MCF 10A (cell line): ENCODE measurements at regions of chr17 and their contacts with region 1.

Region 1: DNA sequence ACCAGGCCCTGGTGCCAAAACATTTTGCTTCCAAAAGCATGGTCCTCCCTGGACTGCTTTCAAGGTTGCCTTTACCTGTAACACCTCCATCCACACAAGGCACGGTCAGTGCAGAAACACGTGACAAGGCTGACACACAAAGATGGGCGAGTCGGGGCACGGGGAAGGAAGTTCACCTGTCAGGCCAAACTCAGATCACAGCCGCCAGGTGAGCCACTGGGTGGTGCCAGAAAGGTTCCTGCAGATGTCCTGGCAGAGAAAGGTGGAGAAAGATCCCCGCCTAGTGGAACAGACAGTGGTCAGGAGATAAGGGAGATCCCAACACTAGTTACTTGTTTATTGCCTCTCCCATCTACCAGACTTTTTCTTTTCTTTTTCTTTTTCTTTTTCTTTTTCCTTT is 155.3 kb downstream of the AIPL1 start:
- DNase-seq: peak; percentile 79
- H3K4me3 Mint-ChIP-seq: no peak overlapping the region
- H3K27ac Mint-ChIP-seq: no peak overlapping the region
- H3K4me1 Mint-ChIP-seq: no peaks in the 10 kb centered on the region
- H3K27me3 Mint-ChIP-seq: peaks cover 61% of the 10 kb centered on the region
- CTCF ChIP-seq: peak; percentile 67

Region 2: GRCh38 chr17:5584383-5585286 is 695.0 kb before region 1 on chr17 and contains the start of gene NLRP1:
- CTCF ChIA-PET with region 1: interaction called, 5 read pairs
- POLR2A ChIA-PET with region 1: interaction called, 3 read pairs
- intact Hi-C with region 1: loop called (anchors 1 kb)
- DNase-seq: peak; percentile 98
- H3K4me3 Mint-ChIP-seq: peak within 1 kb of the TSS; percentile 72
- H3K27ac Mint-ChIP-seq: peak within 1 kb of the TSS; percentile 96
- H3K4me1 Mint-ChIP-seq: peaks cover 28% of the 10 kb centered on the region
- H3K27me3 Mint-ChIP-seq: peaks cover 10% of the 10 kb centered on the region
- CTCF ChIP-seq: no peak
- total RNA-seq, gene NLRP1: 29.0 and 33.5 TPM in 2 replicates

Region 3: GRCh38 chr17:5706577-5707216 is 573.0 kb before region 1 on chr17:
- CTCF ChIA-PET with region 1: no interaction called
- POLR2A ChIA-PET with region 1: no interaction called
- intact Hi-C with region 1: loop called (anchors 5 kb)
- DNase-seq: peak; percentile 62
- H3K4me3 Mint-ChIP-seq: no peak overlapping the region
- H3K27ac Mint-ChIP-seq: no peak overlapping the region
- H3K4me1 Mint-ChIP-seq: no peaks in the 10 kb centered on the region
- H3K27me3 Mint-ChIP-seq: peaks cover 42% of the 10 kb centered on the region
- CTCF ChIP-seq: peak; percentile 50

Region 4: GRCh38 chr17:5793899-5794298 is 485.8 kb before region 1 on chr17:
- CTCF ChIA-PET with region 1: interaction called, 3 read pairs
- POLR2A ChIA-PET with region 1: no interaction called
- intact Hi-C with region 1: loop called (anchors 5 kb)
- DNase-seq: peak; percentile 34
- H3K4me3 Mint-ChIP-seq: no peak overlapping the region
- H3K27ac Mint-ChIP-seq: no peak overlapping the region
- H3K4me1 Mint-ChIP-seq: no peaks in the 10 kb centered on the region
- H3K27me3 Mint-ChIP-seq: peaks cover 18% of the 10 kb centered on the region
- CTCF ChIP-seq: peak; percentile 24

Region 5: DNA sequence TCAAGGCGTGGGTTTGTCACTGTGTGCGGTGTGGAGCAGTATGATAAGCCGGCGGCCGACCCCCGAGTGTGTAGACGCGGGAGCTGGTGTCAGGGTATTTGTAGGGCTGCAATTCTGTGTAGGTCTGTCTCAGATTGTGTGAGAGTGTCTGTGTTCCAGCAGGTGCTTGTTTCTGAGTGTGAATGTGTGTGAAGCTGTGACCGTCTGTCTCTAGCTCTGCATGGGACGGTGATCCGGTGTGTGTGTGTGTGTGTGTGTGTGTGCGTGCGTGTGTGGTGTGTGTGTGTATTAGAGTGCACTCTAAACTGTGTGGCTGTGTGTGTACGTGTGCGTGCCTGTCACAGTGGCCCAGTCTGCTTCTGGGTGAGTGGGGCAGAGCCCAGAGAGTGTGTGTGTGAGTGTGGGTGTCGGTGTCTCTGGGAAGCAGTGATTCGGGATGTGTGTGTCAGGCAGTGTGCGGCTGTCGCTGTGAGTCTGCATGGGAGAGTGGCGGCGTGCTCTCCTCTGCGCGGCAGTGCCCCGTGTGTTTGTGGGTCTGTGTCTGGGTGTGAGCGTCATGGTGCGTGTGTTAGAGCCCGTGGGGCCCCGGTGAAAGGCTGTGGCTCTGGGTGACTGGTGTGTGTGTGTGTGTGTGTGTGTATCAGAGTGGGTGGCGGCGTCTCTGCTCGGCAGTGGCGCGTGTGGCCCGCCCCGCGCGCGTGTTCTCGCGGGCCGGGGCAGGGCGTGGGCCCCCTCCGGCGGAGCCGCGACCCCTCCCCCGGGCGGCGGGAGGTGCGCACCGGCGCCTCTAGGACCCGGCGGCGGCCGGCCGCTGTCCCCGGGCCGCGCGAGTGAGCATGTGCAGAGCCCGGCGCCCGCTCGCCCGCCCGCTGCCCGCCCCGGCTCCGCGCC is 209.9 kb before region 1 on chr17 and contains the start of gene WSCD1:
- CTCF ChIA-PET with region 1: interaction called, 4 read pairs
- POLR2A ChIA-PET with region 1: no interaction called
- intact Hi-C with region 1: loop called (anchors 10 kb)
- DNase-seq: no peak
- H3K4me3 Mint-ChIP-seq: peak within 1 kb of the TSS; percentile 56
- H3K27ac Mint-ChIP-seq: no peak within 1 kb of the TSS
- H3K4me1 Mint-ChIP-seq: peaks cover 12% of the 10 kb centered on the region
- H3K27me3 Mint-ChIP-seq: peaks cover 66% of the 10 kb centered on the region
- CTCF ChIP-seq: no peak
- total RNA-seq, gene WSCD1: 0.44 TPM in 1 of 2 replicates, not detected in the other

Region 6: DNA sequence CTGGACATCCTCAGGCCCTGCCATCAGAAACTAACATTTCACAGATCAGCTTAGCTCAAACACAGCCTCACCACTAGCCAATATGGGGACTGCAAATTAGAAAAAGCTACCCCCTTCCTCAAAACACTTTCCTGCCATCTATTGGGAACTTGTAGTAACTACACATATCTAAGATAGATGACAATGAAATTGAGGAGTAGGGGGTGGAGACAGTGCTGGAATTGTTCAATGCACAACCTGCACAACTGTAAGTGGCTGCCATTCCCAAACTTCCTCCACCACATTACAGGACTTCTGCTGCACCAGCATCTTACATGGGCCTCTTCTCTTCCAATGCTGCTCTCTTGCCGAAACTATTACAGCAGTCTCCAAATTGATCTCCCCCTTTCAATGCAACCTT is 133.4 kb after region 1 on chr17:
- CTCF ChIA-PET with region 1: interaction called, 7 read pairs
- POLR2A ChIA-PET with region 1: no interaction called
- intact Hi-C with region 1: loop called (anchors 1 kb)
- DNase-seq: peak; percentile 61
- H3K4me3 Mint-ChIP-seq: no peak overlapping the region
- H3K27ac Mint-ChIP-seq: no peak overlapping the region
- H3K4me1 Mint-ChIP-seq: no peaks in the 10 kb centered on the region
- H3K27me3 Mint-ChIP-seq: peaks cover 42% of the 10 kb centered on the region
- CTCF ChIP-seq: peak; percentile 53